Activated CD8-positive, alpha-beta T cell treated with anti-CD3 and anti-CD28 coated beads, Interleukin-2, amount 10 ng/mL, durations not matched to agents 7 days and 5 days (primary cell): ENCODE measurements at regions of chr10 and their contacts with region 1.

Region 1: GRCh38 chr10:103685880-103686669 is 169.3 kb downstream of the SH3PXD2A start:
- DNase-seq: peak; percentile 83
- ATAC-seq: peak; percentile 88
- H3K4me3 Mint-ChIP-seq: no peak overlapping the region
- H3K27ac Mint-ChIP-seq: no peak overlapping the region
- H3K4me1 Mint-ChIP-seq: peaks cover 9% of the 10 kb centered on the region
- H3K27me3 Mint-ChIP-seq: peaks cover 3% of the 10 kb centered on the region

Region 2: GRCh38 chr10:103598654-103599115 is 87.4 kb before region 1 on chr10:
- CTCF ChIA-PET with region 1: interaction called, 55 read pairs
- POLR2A ChIA-PET with region 1: interaction called, 3 read pairs
- DNase-seq: peak; percentile 27
- ATAC-seq: no peak
- H3K4me3 Mint-ChIP-seq: no peak overlapping the region
- H3K27ac Mint-ChIP-seq: no peak overlapping the region
- H3K4me1 Mint-ChIP-seq: no peaks in the 10 kb centered on the region
- H3K27me3 Mint-ChIP-seq: no peaks in the 10 kb centered on the region

Region 3: DNA sequence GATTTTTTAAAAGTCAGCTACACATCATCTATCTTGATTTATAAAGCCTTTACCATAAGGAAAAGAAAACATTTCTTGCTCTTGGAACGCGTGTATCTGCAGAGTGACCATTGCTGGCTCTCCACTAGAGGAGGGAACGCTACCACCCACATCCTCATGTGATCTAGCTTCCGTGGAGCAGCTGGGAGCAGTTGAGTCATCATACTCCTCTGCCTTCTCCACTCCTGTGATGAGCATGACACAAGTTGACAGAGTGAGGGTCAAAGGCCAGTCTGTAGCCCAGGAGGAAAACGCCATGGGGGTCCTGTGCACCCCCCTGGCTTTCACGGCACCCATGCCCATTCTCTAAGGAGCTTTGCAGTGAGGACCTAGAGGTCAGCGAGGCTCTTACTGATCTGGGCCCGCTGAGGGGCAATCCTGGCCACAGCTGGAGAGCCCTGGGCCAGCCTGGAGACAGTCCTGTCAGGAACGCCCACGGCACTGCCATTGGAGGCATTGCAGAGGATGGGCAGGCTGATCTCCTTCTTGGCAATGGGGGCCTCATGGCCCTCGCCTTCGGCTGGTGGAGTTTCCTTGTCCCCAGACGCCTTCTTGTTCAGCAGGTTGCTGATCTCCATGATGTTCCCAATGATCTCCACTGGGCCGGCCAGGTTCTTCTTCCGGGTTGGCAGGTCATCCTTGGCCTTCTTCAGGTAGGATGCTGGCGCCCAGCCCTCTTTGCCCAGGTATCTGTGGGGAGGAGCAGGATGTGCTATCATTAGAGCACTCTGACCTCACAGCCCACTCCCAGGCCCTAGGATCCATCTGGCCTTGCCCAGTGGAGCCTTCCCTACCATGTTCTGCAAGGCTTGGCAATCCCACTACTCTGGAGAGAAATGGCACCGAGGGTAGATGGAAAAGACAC is 73.4 kb before region 1 on chr10:
- CTCF ChIA-PET with region 1: interaction called, 22 read pairs
- POLR2A ChIA-PET with region 1: no interaction called
- DNase-seq: no peak
- ATAC-seq: no peak
- H3K4me3 Mint-ChIP-seq: no peak overlapping the region
- H3K27ac Mint-ChIP-seq: no peak overlapping the region
- H3K4me1 Mint-ChIP-seq: no peaks in the 10 kb centered on the region
- H3K27me3 Mint-ChIP-seq: no peaks in the 10 kb centered on the region

Region 4: GRCh38 chr10:103666087-103666761 is 19.9 kb before region 1 on chr10:
- CTCF ChIA-PET with region 1: interaction called, 36 read pairs
- POLR2A ChIA-PET with region 1: no interaction called
- DNase-seq: no peak
- ATAC-seq: no peak
- H3K4me3 Mint-ChIP-seq: no peak overlapping the region
- H3K27ac Mint-ChIP-seq: no peak overlapping the region
- H3K4me1 Mint-ChIP-seq: peaks cover 12% of the 10 kb centered on the region
- H3K27me3 Mint-ChIP-seq: no peaks in the 10 kb centered on the region

Region 5: DNA sequence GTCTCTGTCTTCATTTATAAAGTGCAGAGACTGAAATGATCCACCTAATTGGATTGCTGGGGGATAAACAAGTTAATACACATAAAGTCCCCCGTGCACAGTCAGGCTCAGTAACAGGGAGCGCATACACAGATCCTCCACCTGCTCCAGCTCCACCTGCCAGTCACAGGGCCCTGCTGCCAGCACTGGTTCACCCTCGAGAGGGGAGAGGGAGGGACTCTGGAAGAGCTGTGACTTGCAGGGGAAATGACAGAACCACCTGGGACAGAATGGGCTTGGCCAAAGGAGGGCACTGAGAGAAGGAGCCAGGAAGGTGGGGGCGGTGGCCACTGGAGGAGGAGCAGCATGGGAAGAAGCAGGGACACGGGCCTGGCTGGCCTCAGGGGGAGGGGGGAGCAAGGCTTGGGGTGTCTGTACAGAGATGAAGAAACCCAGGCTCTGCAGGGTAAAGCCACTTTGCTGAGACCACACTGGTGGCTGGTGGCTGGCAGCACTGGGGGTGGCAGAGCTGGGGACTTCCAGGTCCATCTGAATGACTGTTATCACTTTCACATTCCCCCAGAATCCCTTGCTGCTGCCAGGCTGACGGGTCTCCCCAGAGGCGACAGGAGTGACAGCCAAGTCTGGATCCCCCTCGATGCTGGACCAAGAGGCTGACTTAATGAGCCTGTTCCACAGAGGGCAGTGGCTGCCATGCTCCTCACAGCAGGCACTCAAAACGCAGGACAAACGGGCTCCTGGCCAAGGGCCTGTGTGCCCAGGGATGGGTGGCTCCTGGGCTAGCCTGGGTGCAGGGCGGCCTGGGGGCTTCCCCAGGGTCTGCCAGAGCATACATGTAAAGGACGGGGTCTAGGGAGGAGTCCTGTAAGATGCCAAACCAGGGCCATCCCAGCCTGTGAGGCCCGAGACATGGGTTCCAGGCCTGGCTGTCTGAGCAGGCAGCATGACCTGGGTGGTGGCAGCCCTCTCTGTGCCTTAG is 18.2 kb after region 1 on chr10:
- CTCF ChIA-PET with region 1: interaction called, 26 read pairs
- POLR2A ChIA-PET with region 1: no interaction called
- DNase-seq: no peak
- ATAC-seq: no peak
- H3K4me3 Mint-ChIP-seq: no peak overlapping the region
- H3K27ac Mint-ChIP-seq: no peak overlapping the region
- H3K4me1 Mint-ChIP-seq: peaks cover 2% of the 10 kb centered on the region
- H3K27me3 Mint-ChIP-seq: no peaks in the 10 kb centered on the region